ENCODE measurements at regions of chr6 and their contacts with region 1.

Region 1: GRCh38 chr6:28923318-28924102 is at the start of gene TRIM27:
- DNase-seq: peak; percentile 84
- ATAC-seq: peak; percentile 89
- H3K4me3 Mint-ChIP-seq: peak within 1 kb of the TSS; percentile 87
- H3K27ac Mint-ChIP-seq: peak within 1 kb of the TSS; percentile 95
- H3K4me1 Mint-ChIP-seq: peaks cover 39% of the 10 kb centered on the region
- H3K27me3 Mint-ChIP-seq: no peaks in the 10 kb centered on the region
- total RNA-seq, gene TRIM27: 58.3 to 60.1 TPM

Region 2: DNA sequence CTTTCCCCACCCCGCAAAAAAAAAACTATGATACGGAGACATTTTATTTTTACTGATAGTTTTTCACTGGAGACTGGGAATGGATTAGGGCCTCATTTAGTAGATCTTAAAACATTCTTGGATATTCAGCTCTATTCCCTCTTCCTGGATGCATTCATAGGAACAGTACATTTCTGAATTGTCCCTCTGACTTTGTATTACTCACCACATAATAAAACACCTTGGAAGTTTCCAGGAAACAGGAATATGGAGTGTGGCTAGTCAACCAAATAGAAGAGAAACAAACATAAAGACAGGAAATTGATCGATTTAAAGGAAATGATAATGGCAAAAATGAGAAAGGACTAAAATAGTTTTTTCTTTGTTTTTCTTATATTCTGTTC is 250.1 kb before region 1 on chr6:
- CTCF ChIA-PET with region 1: no interaction called
- POLR2A ChIA-PET with region 1: no interaction called
- DNase-seq: no peak
- ATAC-seq: no peak
- H3K4me3 Mint-ChIP-seq: peak overlapping the region; percentile 69
- H3K27ac Mint-ChIP-seq: no peak overlapping the region
- H3K4me1 Mint-ChIP-seq: peaks cover 14% of the 10 kb centered on the region
- H3K27me3 Mint-ChIP-seq: peaks cover 37% of the 10 kb centered on the region

Region 3: DNA sequence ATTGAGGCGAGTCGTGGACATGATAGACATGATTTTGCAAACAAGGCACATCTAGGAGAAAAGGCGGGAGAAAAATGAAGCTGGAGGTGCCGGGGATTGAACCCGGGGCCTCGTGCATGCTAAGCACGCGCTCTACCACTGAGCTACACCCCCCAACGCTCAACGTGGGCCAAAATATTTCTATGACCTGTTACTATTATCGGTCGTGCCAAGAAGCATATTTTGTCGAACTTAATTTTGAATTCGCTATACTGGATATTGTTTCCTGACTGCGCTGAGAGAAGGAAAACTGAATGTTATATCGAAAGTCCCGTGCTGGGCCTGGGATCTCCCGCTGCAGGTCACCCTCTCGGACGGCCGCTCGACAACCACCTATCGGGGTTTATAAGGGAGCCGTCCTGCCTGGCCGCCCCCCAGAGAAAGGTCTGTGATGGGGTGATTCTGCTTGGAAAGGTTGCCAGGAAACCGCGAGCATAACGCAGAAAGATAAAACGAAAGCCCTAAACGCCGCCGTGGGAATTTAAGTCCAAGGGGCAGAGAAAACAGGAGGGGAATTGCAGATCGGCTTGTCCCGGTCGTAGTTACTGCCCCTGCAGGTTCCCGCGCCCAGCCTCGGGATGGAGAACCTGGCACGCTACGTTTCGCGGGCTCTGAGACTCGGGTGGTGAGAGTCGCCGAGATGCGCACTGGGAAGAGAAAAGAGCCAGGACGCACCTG is 59.7 kb before region 1 on chr6:
- CTCF ChIA-PET with region 1: interaction called, 6 read pairs
- POLR2A ChIA-PET with region 1: interaction called, 60 read pairs
- DNase-seq: peak; percentile 90
- ATAC-seq: peak; percentile 47
- H3K4me3 Mint-ChIP-seq: peak overlapping the region; percentile 89
- H3K27ac Mint-ChIP-seq: peak overlapping the region; percentile 81
- H3K4me1 Mint-ChIP-seq: peaks cover 53% of the 10 kb centered on the region
- H3K27me3 Mint-ChIP-seq: peaks cover 7% of the 10 kb centered on the region

Region 4: DNA sequence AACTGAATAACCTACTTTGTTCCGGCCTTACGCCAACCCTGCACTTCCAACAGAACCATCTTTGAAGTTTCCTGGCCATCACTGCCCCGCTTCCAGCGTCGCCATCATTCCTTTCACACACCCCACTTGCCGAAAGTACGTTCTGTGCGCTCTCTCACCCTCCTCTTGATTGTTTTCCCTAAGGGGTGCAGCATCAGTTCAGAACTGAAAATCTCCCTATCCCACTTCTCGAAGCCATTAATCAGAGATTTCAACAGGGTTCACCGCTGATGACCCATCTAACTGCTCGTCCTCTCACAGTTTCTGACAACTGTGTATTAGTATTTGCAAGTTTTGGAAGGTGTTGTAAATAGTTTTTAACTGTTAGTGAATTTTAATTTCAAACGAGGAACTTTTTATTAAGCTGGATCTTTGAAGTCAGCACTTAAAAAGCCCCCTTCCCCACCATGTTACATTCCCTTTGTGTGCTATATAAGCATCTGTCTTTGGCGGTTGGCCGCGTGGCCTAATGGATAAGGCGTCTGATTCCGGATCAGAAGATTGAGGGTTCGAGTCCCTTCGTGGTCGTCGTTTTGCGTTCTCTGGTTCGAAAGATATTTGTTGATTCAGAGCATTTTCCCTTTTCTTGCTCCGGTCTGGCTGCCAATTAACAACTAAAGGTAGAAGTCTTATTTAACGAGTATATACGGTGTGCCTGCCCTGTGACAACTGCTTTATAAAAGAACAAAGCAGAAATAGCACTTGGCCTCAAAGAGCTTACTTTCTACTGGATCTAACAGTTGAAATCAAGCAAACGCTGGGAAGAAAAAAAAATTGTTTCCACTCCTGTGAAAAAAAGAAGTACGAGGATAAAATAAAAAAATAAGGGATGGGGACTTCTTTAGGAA is 42.4 kb before region 1 on chr6:
- CTCF ChIA-PET with region 1: interaction called, 3 read pairs
- POLR2A ChIA-PET with region 1: interaction called, 36 read pairs
- DNase-seq: peak; percentile 76
- ATAC-seq: no peak
- H3K4me3 Mint-ChIP-seq: peak overlapping the region; percentile 74
- H3K27ac Mint-ChIP-seq: peak overlapping the region; percentile 73
- H3K4me1 Mint-ChIP-seq: peaks cover 45% of the 10 kb centered on the region
- H3K27me3 Mint-ChIP-seq: peaks cover 21% of the 10 kb centered on the region

Region 5: GRCh38 chr6:28895134-28895812 is 28.2 kb before region 1 on chr6:
- CTCF ChIA-PET with region 1: interaction called, 10 read pairs
- POLR2A ChIA-PET with region 1: interaction called, 36 read pairs
- DNase-seq: peak; percentile 97
- ATAC-seq: peak; percentile 84
- H3K4me3 Mint-ChIP-seq: peak overlapping the region; percentile 92
- H3K27ac Mint-ChIP-seq: peak overlapping the region; percentile 98
- H3K4me1 Mint-ChIP-seq: peaks cover 12% of the 10 kb centered on the region
- H3K27me3 Mint-ChIP-seq: peaks cover 6% of the 10 kb centered on the region

Region 6: DNA sequence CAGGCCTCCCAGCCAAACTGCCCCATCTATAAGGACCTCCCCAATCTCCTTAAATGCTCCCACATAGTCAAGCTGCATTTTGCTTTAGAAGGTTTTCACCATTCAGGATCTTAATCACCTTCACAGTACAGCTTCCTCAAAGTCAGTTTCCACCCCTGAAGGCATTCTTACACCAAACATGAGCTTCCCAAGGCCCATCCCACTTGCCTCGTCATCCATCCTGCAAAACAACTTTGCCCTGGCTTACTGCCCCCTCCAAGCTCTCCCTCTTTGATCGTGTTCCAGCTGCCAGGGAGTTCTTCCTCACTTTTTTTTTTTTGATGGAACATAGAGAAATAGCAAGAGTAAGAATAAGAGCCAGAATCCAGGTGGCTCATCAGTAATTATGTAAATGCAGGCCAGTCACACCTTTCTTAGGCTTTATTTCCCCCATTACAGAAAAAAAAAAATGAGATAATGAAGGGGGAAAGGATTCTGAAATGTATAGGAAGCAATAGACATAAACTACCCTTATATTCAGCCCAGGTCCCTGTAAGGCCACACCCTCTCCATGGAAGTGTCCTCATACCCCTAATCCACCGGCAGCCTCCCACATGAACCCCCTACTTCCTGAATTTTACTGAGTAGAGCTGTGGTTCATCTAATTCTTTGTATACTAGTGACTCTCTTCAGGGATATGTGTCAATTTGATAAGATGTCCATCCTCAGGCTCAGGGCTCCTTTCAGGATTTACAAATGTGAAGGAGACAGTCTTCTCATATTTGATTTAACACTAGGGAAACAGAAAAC is 12.4 kb before region 1 on chr6:
- CTCF ChIA-PET with region 1: interaction called, 11 read pairs
- POLR2A ChIA-PET with region 1: interaction called, 14 read pairs
- DNase-seq: no peak
- ATAC-seq: no peak
- H3K4me3 Mint-ChIP-seq: no peak overlapping the region
- H3K27ac Mint-ChIP-seq: peak overlapping the region; percentile 17
- H3K4me1 Mint-ChIP-seq: peaks cover 5% of the 10 kb centered on the region
- H3K27me3 Mint-ChIP-seq: no peaks in the 10 kb centered on the region

Region 7: DNA sequence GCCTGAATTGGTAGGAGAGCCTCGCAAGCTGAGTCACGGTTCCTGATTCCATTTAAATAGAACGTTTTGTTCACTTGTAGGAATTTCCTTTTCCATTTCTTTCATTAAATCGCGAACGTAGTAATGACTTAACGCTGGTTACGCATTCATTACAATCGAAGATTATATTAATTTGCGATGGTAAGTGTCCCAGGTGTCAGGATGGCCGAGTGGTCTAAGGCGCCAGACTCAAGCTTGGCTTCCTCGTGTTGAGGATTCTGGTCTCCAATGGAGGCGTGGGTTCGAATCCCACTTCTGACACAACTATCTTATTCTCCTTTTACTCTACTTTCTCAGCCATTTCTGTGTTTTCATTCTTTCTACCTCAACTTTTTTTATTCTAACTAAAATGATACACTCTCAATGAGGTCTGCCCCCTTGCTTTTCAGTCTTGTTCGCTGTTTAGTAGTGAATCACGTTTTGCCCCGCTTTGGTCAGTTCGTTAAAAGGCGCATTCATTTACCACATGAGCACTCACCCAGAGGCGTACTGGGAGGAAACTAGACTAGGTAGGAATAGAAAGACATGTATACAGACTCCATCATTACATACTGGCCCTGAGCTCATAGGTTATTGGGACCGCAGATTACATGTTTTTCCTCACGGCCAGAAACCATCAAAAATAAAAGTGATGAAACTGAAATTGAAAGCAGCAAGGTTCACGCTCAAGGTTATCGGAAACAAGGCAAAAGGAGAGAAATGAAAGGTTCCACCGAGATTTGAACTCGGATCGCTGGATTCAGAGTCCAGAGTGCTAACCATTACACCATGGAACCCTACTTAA is 17.6 kb after region 1 on chr6:
- CTCF ChIA-PET with region 1: interaction called, 15 read pairs
- POLR2A ChIA-PET with region 1: interaction called, 45 read pairs
- DNase-seq: peak; percentile 89
- ATAC-seq: peak; percentile 81
- H3K4me3 Mint-ChIP-seq: peak overlapping the region; percentile 80
- H3K27ac Mint-ChIP-seq: peak overlapping the region; percentile 94
- H3K4me1 Mint-ChIP-seq: peaks cover 47% of the 10 kb centered on the region
- H3K27me3 Mint-ChIP-seq: no peaks in the 10 kb centered on the region

Region 8: DNA sequence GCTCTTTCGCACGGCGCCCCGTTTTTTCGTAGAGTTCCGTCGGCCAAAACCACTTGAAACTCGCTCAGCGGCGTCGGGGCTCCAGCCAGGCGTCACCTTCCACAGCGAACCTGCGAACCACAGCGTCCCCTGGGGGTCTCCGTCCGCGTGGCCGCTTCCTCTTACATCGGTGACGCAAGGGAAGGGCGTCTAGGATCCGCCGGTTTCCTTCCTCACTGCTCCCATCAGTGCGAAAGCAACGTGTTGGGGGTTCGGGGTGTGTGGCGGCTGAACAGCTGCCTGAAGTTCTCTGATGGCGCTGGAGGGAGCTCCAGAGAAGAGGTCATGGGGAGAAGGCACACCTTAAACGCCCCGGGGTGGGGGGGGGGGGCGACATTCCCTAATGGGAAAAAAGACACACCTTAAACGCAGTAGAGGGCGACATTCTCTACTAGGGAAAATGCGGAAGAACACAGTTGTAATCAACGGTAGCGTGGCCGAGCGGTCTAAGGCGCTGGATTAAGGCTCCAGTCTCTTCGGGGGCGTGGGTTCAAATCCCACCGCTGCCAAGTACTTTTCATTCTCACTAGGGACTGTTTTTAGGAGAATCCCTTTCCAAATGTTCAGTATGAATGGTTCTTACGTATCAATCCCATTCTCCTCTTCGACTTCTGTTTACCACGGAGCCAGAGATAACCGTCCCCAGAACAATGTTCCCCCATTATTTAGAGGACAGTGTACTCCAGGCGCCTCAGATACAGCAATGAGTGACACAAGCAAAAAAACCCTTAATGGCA is 65.2 kb after region 1 on chr6:
- CTCF ChIA-PET with region 1: no interaction called
- POLR2A ChIA-PET with region 1: no interaction called
- DNase-seq: peak; percentile 83
- ATAC-seq: peak; percentile 90
- H3K4me3 Mint-ChIP-seq: peak overlapping the region; percentile 80
- H3K27ac Mint-ChIP-seq: peak overlapping the region; percentile 54
- H3K4me1 Mint-ChIP-seq: peaks cover 34% of the 10 kb centered on the region
- H3K27me3 Mint-ChIP-seq: peaks cover 38% of the 10 kb centered on the region

Measured in activated CD8-positive, alpha-beta T cell treated with anti-CD3 and anti-CD28 coated beads, Interleukin-2, amount 10 ng/mL, durations not matched to agents 7 days and 5 days (primary cell).